ENCODE measurements at regions of chr19 and their contacts with region 1.

Region 1: DNA sequence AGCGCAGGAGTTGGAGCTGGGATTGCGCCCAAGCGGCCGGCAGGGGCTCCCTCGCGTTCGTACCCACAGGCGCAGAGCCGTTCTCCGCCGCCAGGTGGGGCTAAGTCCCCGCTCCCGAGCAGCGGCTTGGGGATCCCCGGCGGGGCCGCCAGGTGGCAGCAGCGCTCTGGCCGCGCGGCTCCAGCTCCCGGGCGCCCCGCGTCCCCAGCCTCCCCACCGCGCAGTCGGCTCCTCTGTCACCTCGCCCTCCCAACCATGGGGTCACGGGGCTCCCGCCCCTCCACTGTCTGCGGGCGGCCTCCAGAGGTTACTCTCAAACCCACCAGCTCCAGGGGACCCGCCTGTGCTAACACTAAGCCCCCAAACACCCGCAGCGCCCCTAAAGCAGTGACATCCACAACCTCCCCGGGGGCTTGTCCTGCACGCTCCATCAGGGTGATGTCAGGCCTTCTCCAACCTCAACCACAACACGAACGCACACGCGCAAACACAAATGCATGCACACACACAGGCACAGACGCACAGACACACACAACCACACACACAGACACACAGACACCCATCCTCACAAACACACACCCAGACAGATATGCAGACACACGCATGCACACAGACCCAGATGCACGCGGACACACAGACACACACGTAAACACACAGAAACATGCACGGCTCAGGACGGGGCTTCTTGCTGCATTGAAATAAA is 18.4 kb upstream of the KCTD15 start:
- DNase-seq: peak; percentile 98
- H3K4me3 ChIP-seq: peak overlapping the region in 1 of 2 experiments; percentile 53; a peak in 2 of 4 replicates
- H3K27ac ChIP-seq: no peak overlapping the region
- H3K4me1 ChIP-seq: peaks cover 0 to 21% of the 10 kb centered on the region in 2 experiments; a peak in 1 of 4 replicates
- H3K27me3 ChIP-seq: no peaks in the 10 kb centered on the region; the same call in 1 of the 2 replicates
- CTCF ChIP-seq: peak; percentile 97
- EP300 ChIP-seq: no peak
- RAD21 ChIP-seq: peak; percentile 99

Region 2: DNA sequence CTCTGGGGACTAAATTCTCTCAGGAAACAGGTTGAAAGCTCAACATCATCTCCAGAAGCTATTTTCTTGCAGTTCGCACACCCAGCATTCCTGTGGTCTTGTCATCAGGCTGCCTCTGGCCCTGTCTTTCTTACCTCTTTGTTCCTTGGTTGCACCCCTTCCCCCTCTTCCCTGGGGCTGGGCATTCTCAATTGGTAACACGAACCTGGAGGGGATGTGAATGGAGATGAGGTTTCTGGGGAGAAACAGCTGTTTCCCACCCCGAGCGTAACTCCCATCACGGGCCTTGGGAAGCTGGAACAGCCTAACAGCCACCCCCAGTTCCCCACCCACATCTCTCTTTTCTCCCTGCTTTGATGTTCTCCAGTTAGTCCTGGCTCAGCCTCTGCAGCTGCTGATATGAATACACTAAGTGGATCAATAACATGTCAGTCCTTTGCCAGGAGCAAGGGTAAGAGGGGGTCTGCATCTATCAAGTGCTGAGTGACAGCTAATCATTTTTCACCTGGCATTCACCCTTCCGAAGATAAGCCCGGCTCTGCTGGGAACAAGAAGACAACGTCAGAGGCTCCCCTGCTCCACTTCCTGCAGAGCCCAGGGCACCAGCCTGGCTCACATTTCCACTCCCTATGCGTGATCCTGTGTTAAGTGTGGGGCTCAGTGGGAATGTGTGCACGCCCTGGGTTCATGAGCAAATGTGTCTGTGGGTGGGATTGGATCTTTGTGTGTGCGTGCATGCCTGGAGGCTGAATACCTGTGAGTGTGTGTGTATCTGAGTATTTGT is 55.6 kb before region 1 on chr19:
- CTCF ChIA-PET with region 1: interaction called, 11 read pairs
- POLR2A ChIA-PET with region 1: no interaction called
- DNase-seq: peak; percentile 65
- H3K4me3 ChIP-seq: no peak overlapping the region
- H3K27ac ChIP-seq: peak overlapping the region in 1 of 2 experiments; percentile 24; a peak in 1 of 4 replicates
- H3K4me1 ChIP-seq: peaks cover 0 to 48% of the 10 kb centered on the region in 2 experiments; a peak in 1 of 4 replicates
- H3K27me3 ChIP-seq: no peaks in the 10 kb centered on the region
- CTCF ChIP-seq: no peak
- EP300 ChIP-seq: peak in 1 of 2 experiments; percentile 59; a peak in 1 of 4 replicates
- RAD21 ChIP-seq: no peak

Region 3: DNA sequence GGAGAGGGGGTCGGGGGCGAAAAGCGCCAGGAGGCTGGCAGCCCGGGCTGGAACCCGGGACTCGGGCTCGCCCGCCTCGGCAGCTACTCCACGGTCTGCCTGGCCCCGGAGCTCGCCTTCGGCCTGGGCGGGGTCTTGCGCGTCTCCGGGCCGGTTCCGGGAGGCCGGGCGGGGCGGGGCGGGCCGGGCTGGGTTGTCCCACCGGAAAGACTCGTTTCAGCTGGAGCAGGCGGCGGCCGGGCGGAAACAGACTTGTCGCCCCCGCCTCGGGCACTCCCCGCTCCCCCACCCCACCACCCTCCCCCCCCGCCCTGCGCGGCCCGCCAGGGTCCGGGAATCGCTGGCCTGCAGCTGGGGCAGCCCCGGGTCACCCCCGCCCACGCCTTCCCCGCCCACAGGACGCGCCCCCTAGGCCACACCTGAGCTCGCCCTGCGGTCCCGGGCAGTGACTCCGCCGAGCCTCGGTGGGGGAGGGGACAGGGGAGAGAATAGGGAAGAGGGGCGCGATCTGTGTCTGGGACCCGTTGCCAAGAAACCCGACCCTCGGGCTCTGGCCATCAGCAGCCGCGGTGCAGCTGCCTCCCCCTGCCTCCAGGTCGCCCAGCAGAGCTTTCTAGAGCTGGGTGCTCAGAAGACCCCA is 127.8 kb after region 1 on chr19:
- CTCF ChIA-PET with region 1: interaction called, 16 read pairs
- POLR2A ChIA-PET with region 1: no interaction called
- DNase-seq: peak; percentile 85
- H3K4me3 ChIP-seq: peak overlapping the region in 1 of 2 experiments; percentile 21; a peak in 1 of 4 replicates
- H3K27ac ChIP-seq: no peak overlapping the region
- H3K4me1 ChIP-seq: peaks cover 0 to 5% of the 10 kb centered on the region in 2 experiments; a peak in 1 of 4 replicates
- H3K27me3 ChIP-seq: no peaks in the 10 kb centered on the region
- CTCF ChIP-seq: no peak
- EP300 ChIP-seq: no peak
- RAD21 ChIP-seq: no peak

Region 4: GRCh38 chr19:34034318-34034846 is 256.1 kb after region 1 on chr19:
- CTCF ChIA-PET with region 1: interaction called, 42 read pairs
- POLR2A ChIA-PET with region 1: no interaction called
- DNase-seq: no peak
- H3K4me3 ChIP-seq: no peak overlapping the region
- H3K27ac ChIP-seq: no peak overlapping the region
- H3K4me1 ChIP-seq: no peaks in the 10 kb centered on the region
- H3K27me3 ChIP-seq: no peaks in the 10 kb centered on the region
- CTCF ChIP-seq: no peak
- EP300 ChIP-seq: no peak
- RAD21 ChIP-seq: no peak

Region 5: GRCh38 chr19:34104096-34104495 is 325.9 kb after region 1 on chr19:
- CTCF ChIA-PET with region 1: interaction called, 127 read pairs
- POLR2A ChIA-PET with region 1: no interaction called
- DNase-seq: no peak
- H3K4me3 ChIP-seq: no peak overlapping the region
- H3K27ac ChIP-seq: no peak overlapping the region
- H3K4me1 ChIP-seq: no peaks in the 10 kb centered on the region
- H3K27me3 ChIP-seq: no peaks in the 10 kb centered on the region
- CTCF ChIP-seq: no peak
- EP300 ChIP-seq: no peak
- RAD21 ChIP-seq: no peak

Region 6: DNA sequence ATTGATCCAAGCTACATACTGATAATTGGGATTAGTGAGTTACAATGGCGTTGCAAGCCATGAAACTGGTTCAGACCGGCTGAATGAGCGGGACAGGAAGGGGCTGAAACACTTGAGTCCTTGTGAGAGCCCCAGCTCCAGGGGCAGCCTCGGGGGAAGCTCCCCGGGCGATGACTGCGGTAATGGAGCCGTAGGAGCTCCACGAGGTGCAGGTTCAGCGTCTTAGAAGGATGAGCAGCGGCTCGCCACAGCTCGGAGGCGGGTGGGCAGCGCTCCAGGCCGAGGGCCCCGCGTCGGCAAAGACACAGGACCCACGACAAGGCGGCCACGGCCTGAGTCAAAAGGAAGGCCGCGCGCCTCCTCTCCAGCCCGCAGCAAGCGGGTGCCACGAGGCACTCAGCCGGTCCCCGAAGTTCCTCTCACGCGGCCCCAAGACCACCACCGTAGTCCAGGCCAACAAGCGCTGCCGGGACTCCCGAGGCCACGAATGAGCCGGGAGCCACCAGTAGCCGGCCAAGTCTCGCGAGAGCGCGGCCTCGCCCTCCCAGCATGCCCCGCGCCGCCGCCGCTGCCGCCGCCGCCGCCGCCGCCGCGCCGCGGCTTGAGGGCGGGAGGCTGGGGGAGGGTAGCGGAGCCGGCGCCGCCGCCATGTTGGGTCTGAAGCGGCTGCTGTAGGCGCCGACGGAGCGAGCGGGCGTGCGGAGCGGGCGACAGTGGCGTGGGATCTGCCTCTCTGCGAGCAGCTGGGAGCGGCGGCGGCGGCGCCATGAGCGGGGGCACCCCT is 393.8 kb after region 1 on chr19 and contains the start of gene LSM14A:
- CTCF ChIA-PET with region 1: interaction called, 17 read pairs
- POLR2A ChIA-PET with region 1: interaction called, 5 read pairs
- DNase-seq: peak; percentile 97
- H3K4me3 ChIP-seq: peak within 1 kb of the TSS; percentile 72 to 81
- H3K27ac ChIP-seq: peak within 1 kb of the TSS; percentile 96
- H3K4me1 ChIP-seq: peaks cover 9 to 18% of the 10 kb centered on the region in 2 experiments
- H3K27me3 ChIP-seq: no peaks in the 10 kb centered on the region
- CTCF ChIP-seq: no peak
- EP300 ChIP-seq: 0 out of 4 replicates have a peak, but pooled peaks of 1 of the 2 experiments have one; percentile 18
- RAD21 ChIP-seq: no peak
- polyA plus RNA-seq, gene LSM14A: 79.0 and 87.7 TPM in 2 replicates